ENCODE measurements at regions of chr17 and their contacts with region 1.

Region 1: GRCh38 chr17:8702996-8703395 is 41.6 kb downstream of the CCDC42 start:
- DNase-seq: no peak
- ATAC-seq: no peak
- H3K4me3 ChIP-seq: no peak overlapping the region
- H3K27ac ChIP-seq: no peak overlapping the region
- H3K4me1 ChIP-seq: peaks cover 6% of the 10 kb centered on the region
- H3K27me3 ChIP-seq: no peaks in the 10 kb centered on the region

Region 2: DNA sequence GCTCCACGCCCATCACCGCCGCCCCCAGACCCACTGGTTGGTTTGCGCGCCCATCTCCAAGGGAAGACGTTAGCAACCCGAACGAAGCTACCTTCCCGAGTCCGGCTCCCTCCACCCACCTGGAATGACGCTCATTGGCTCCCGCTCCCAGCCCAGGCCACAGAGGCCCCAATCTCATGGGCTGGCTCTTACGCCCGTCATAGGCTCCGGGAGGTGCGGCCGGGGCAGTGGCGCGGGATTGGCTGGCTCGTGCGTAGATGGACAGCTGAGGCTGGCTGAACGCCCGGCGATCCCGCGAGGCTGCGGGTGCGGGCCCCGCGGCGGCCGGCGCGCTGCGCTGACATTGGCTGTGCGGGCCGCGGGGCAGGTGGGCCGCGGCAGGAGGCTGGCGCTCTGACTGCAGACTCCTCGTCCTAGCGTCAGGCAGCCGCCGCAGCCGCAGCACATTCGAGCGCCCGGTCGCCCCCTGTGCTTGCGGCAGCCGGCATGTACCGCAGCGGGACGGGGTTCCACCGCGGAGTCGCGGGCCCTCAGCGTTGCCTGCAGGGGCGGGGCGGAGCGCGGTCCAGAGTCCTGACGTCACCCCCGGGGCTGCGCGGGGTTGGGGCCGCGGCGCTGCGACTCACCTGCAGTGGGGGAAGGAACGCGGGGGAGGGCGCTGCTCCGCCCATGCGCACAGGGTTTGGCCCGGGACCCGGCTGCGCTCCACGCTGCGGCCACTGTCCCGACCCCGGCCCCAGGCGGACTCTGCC is 72.0 kb before region 1 on chr17:
- intact Hi-C with region 1: loop called in 1 of 4 experiments (anchors 5 kb)
- DNase-seq: peak; percentile 98 to 99 (median 99)
- ATAC-seq: peak; percentile 99
- H3K4me3 ChIP-seq: peak overlapping the region; percentile 88
- H3K27ac ChIP-seq: peak overlapping the region; percentile 77
- H3K4me1 ChIP-seq: no peaks in the 10 kb centered on the region
- H3K27me3 ChIP-seq: no peaks in the 10 kb centered on the region

Measured in right cardiac atrium (tissue), 5 donors.